H1 (cell line): ENCODE measurements at regions of chr1 and their contacts with region 1.

Region 1: GRCh38 chr1:110460253-110461220 is 9.6 kb downstream of the PROK1 start:
- DNase-seq: peak in 1 of 2 experiments; percentile 93
- H3K4me3 ChIP-seq: no peak overlapping the region
- H3K27ac ChIP-seq: no peak overlapping the region
- H3K4me1 ChIP-seq: no peaks in the 10 kb centered on the region
- H3K27me3 ChIP-seq: no peaks in the 10 kb centered on the region
- CTCF ChIP-seq: peak; percentile 87 to 97 (median 95)
- EP300 ChIP-seq: no peak
- POLR2A ChIP-seq: no peak
- RAD21 ChIP-seq: peak; percentile 100

Region 2: DNA sequence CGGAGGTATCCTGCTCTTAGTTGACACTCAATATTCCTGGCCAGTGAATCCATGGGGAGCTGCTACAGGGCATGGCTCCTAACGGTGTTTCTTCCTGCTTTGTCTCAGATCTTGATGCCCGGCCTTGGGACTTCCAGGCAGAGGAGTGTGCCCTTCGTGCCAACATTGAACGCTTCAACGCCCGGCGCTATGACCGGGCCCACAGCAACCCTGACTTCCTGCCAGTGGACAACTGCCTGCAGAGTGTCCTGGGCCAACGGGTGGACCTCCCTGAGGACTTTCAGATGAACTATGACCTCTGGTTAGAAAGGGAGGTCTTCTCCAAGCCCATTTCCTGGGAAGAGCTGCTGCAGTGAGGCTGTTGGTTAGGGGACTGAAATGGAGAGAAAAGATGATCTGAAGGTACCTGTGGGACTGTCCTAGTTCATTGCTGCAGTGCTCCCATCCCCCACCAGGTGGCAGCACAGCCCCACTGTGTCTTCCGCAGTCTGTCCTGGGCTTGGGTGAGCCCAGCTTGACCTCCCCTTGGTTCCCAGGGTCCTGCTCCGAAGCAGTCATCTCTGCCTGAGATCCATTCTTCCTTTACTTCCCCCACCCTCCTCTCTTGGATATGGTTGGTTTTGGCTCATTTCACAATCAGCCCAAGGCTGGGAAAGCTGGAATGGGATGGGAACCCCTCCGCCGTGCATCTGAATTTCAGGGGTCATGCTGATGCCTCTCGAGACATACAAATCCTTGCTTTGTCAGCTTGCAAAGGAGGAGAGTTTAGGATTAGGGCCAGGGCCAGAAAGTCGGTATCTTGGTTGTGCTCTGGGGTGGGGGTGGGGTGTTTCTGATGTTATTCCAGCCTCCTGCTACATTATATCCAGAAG is 406.7 kb before region 1 on chr1:
- CTCF ChIA-PET with region 1: interaction called, 11 read pairs
- POLR2A ChIA-PET with region 1: interaction called, 3 read pairs
- DNase-seq: peak in 1 of 2 experiments; percentile 97
- H3K4me3 ChIP-seq: no peak overlapping the region
- H3K27ac ChIP-seq: no peak overlapping the region
- H3K4me1 ChIP-seq: no peaks in the 10 kb centered on the region
- H3K27me3 ChIP-seq: no peaks in the 10 kb centered on the region
- CTCF ChIP-seq: peak; percentile 87 to 99 (median 99)
- EP300 ChIP-seq: no peak
- POLR2A ChIP-seq: no peak
- RAD21 ChIP-seq: peak; percentile 91 to 96

Region 3: GRCh38 chr1:110196917-110197765 is 263.4 kb before region 1 on chr1:
- CTCF ChIA-PET with region 1: interaction called, 230 read pairs
- POLR2A ChIA-PET with region 1: no interaction called
- DNase-seq: peak in 1 of 2 experiments; percentile 63
- H3K4me3 ChIP-seq: no peak overlapping the region
- H3K27ac ChIP-seq: no peak overlapping the region
- H3K4me1 ChIP-seq: peaks cover 0 to 6% (median 2%) of the 10 kb centered on the region in 4 experiments; a peak in 2 of 7 replicates
- H3K27me3 ChIP-seq: no peaks in the 10 kb centered on the region
- CTCF ChIP-seq: peak; percentile 73 to 95 (median 81)
- EP300 ChIP-seq: no peak
- POLR2A ChIP-seq: no peak
- RAD21 ChIP-seq: peak; percentile 70 to 82

Region 4: DNA sequence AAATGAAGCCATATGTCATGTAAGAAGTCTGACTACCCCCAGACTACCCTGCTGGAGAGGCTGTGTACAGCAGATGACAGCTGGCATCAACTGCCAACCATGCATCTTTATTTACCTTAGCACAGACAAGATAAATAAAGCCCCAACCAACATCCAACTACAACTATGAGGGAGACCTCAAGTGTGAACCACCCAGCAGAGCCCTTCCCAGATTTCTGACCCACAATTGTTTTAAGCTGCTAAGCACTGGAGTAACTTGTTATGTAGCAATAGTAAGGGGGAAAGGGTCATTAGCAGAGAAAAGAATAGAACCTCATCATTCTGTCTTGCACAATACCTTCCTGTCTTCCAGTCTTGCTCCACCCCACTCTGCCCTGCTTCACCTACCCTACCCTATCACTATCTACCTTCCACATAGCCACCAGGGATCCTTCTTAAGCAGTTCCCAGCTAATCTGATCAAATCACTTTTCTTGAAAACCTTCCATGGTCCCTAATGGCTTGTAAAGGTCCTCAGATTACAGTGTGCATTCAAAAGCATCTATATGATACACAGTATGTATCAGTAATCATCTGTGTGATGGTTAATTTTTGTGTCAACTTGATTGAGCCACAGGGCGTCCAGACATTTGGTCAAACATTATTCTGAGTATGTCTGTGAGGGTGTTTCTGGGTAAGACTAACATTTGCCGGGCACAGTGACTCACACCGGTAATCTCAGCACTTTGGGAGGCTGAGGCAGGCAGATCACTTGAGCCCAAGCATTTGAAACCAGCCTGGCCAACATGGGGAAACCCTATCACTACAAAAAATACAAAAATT is 141.0 kb before region 1 on chr1:
- CTCF ChIA-PET with region 1: interaction called, 30 read pairs
- POLR2A ChIA-PET with region 1: no interaction called
- DNase-seq: no peak
- H3K4me3 ChIP-seq: no peak overlapping the region
- H3K27ac ChIP-seq: no peak overlapping the region
- H3K4me1 ChIP-seq: no peaks in the 10 kb centered on the region
- H3K27me3 ChIP-seq: no peaks in the 10 kb centered on the region
- CTCF ChIP-seq: no peak
- EP300 ChIP-seq: no peak
- POLR2A ChIP-seq: no peak
- RAD21 ChIP-seq: no peak

Region 5: GRCh38 chr1:110412576-110412975 is 48.0 kb before region 1 on chr1:
- CTCF ChIA-PET with region 1: interaction called, 828 read pairs
- POLR2A ChIA-PET with region 1: interaction called, 6 read pairs
- DNase-seq: peak in 1 of 2 experiments; percentile 79
- H3K4me3 ChIP-seq: no peak overlapping the region
- H3K27ac ChIP-seq: no peak overlapping the region
- H3K4me1 ChIP-seq: peaks cover 0 to 4% (median 0%) of the 10 kb centered on the region in 4 experiments; a peak in 4 of 7 replicates
- H3K27me3 ChIP-seq: 0 out of 7 replicates have a peak, but pooled peaks cover 0 to 3% (median 0%) of the 10 kb centered on the region in 4 experiments
- CTCF ChIP-seq: peak; percentile 76 to 89 (median 89)
- EP300 ChIP-seq: no peak
- POLR2A ChIP-seq: no peak
- RAD21 ChIP-seq: peak; percentile 88 to 97

Region 6: GRCh38 chr1:110482662-110483307 is 22.2 kb after region 1 on chr1:
- CTCF ChIA-PET with region 1: interaction called, 31 read pairs
- POLR2A ChIA-PET with region 1: interaction called, 3 read pairs
- DNase-seq: no peak
- H3K4me3 ChIP-seq: no peak overlapping the region
- H3K27ac ChIP-seq: no peak overlapping the region
- H3K4me1 ChIP-seq: peaks cover 6 to 14% (median 10%) of the 10 kb centered on the region in 4 experiments
- H3K27me3 ChIP-seq: no peaks in the 10 kb centered on the region; a peak in 2 of 7 replicates
- CTCF ChIP-seq: peak; percentile 13 to 31 (median 28); a peak in 3 of 4 replicates
- EP300 ChIP-seq: no peak
- POLR2A ChIP-seq: no peak
- RAD21 ChIP-seq: no peak